ENCODE measurements at regions of chr12 and their contacts with region 1.

Region 1: DNA sequence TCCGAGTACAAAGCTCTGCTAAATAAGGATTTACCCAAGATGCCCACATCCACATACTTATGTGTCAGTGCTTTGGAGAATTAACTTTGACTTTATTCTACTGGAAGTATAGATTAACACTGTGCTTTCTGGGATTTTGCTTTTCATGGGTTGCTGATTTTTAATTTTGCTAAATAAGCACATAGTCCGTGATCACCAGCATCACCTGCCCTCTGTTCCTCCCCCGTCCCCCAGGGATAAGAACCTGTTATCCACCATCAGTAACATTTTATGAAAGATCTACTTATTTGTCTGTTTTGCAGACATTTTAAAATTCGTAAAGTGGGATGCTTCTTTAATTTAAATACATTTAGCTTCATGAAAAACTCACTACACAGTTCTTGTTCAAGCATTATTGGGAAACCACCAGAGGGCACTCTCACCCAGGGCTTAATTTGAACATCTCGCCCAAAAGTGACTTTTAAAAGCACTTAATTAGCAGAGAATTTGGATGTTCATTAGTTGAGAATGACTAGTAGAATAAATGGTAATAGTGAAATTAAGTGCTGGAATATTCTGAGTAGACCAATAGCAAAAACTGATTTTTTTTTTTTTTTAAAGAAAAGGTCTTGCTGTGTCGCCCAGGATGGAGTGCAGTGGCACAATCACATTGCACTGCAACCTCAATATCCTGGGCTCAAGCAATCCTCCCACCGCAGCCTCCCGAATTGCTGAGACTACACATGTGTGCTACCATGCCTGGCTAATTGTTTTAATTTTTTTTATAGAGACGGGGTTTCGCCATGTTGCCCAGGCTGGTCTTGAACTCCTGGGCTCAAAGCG is 35.7 kb downstream of the MRPL42 start:
- DNase-seq: peak; percentile 16 to 71 (median 54)
- ATAC-seq: peak; percentile 67
- H3K4me3 ChIP-seq: no peak overlapping the region
- H3K4me3 Mint-ChIP-seq: no peak overlapping the region
- H3K27ac ChIP-seq: no peak overlapping the region
- H3K27ac Mint-ChIP-seq: peak overlapping the region in 3 of 9 donors; percentile 36 to 69 (median 60)
- H3K4me1 ChIP-seq: no peaks in the 10 kb centered on the region
- H3K4me1 Mint-ChIP-seq: peaks cover 0 to 29% (median 0%) of the 10 kb centered on the region in 7 donors
- H3K27me3 ChIP-seq: no peaks in the 10 kb centered on the region
- H3K27me3 Mint-ChIP-seq: no peaks in the 10 kb centered on the region

Region 2: GRCh38 chr12:93742110-93742934 is 239.3 kb after region 1 on chr12:
- CTCF ChIA-PET with region 1: interaction called, 3 read pairs
- POLR2A ChIA-PET with region 1: no interaction called
- intact Hi-C with region 1: loop called (anchors 1 to 2 kb)
- DNase-seq: peak; percentile 25 to 63 (median 40)
- ATAC-seq: peak; percentile 96
- H3K4me3 ChIP-seq: peak overlapping the region; percentile 83
- H3K4me3 Mint-ChIP-seq: peak overlapping the region; percentile 83 to 97 (median 93)
- H3K27ac ChIP-seq: peak overlapping the region; percentile 74
- H3K27ac Mint-ChIP-seq: peak overlapping the region; percentile 29 to 98 (median 92)
- H3K4me1 ChIP-seq: peaks cover 0 to 13% of the 10 kb centered on the region in 2 donors
- H3K4me1 Mint-ChIP-seq: peaks cover 27 to 55% (median 41%) of the 10 kb centered on the region in 7 donors
- H3K27me3 ChIP-seq: no peaks in the 10 kb centered on the region
- H3K27me3 Mint-ChIP-seq: peaks cover 0 to 2% (median 0%) of the 10 kb centered on the region in 5 donors

Region 3: GRCh38 chr12:93766796-93767523 is 263.9 kb after region 1 on chr12:
- CTCF ChIA-PET with region 1: interaction called, 14 read pairs
- POLR2A ChIA-PET with region 1: no interaction called
- intact Hi-C with region 1: loop called (anchors 1 to 2 kb)
- DNase-seq: peak in 6 of 9 donors; percentile 23 to 58 (median 28)
- ATAC-seq: peak; percentile 84
- H3K4me3 ChIP-seq: no peak overlapping the region
- H3K4me3 Mint-ChIP-seq: peak overlapping the region in 5 of 10 donors; percentile 0 to 53 (median 6)
- H3K27ac ChIP-seq: no peak overlapping the region
- H3K27ac Mint-ChIP-seq: peak overlapping the region in 7 of 9 donors; percentile 6 to 74 (median 27)
- H3K4me1 ChIP-seq: no peaks in the 10 kb centered on the region
- H3K4me1 Mint-ChIP-seq: peaks cover 11 to 53% (median 17%) of the 10 kb centered on the region in 7 donors
- H3K27me3 ChIP-seq: no peaks in the 10 kb centered on the region
- H3K27me3 Mint-ChIP-seq: no peaks in the 10 kb centered on the region

Region 4: GRCh38 chr12:93979189-93979588 is 476.2 kb after region 1 on chr12:
- CTCF ChIA-PET with region 1: interaction called, 14 read pairs
- POLR2A ChIA-PET with region 1: no interaction called
- intact Hi-C with region 1: loop called (anchors 1 to 2 kb)
- DNase-seq: peak in 4 of 9 donors; percentile 21 to 51 (median 31)
- ATAC-seq: peak; percentile 27
- H3K4me3 ChIP-seq: no peak overlapping the region
- H3K4me3 Mint-ChIP-seq: no peak overlapping the region
- H3K27ac ChIP-seq: no peak overlapping the region
- H3K27ac Mint-ChIP-seq: peak overlapping the region in 1 of 9 donors; percentile 27
- H3K4me1 ChIP-seq: no peaks in the 10 kb centered on the region
- H3K4me1 Mint-ChIP-seq: peaks cover 13 to 48% (median 30%) of the 10 kb centered on the region in 7 donors
- H3K27me3 ChIP-seq: no peaks in the 10 kb centered on the region
- H3K27me3 Mint-ChIP-seq: peaks cover 0 to 6% (median 0%) of the 10 kb centered on the region in 5 donors

Measured in naive thymus-derived CD4-positive, alpha-beta T cell (primary cell).